ENCODE measurements at regions of chr1 and their contacts with region 1.

Region 1: DNA sequence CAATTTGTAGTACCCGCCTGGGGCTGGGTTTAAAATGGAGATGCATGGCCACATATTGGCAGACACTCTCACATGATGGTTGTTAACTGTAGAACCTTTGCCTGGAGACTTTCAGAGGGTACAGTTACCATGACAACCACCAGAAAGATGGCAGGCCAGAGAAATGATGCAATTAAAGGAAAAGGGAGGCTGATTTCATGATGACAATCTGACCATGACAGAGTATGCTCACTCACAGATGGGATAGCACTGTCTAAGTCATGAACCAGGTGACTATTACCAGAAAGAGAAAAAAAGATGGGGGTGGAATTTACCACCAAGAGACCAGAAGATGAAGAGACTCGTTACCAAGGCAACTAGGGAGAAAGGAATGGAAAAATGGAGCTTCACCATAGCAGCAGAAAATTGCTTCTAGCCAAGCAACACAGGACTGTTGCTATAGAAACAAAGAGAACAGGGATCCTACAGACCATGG is 3.5 kb upstream of the TRIT1 start:
- DNase-seq: no peak
- H3K4me3 Mint-ChIP-seq: no peak overlapping the region
- H3K27ac Mint-ChIP-seq: no peak overlapping the region
- H3K4me1 Mint-ChIP-seq: peaks cover 9% of the 10 kb centered on the region
- H3K27me3 Mint-ChIP-seq: peaks cover 2% of the 10 kb centered on the region

Region 2: GRCh38 chr1:39845275-39846116 is 41.3 kb before region 1 on chr1:
- CTCF ChIA-PET with region 1: no interaction called
- intact Hi-C with region 1: loop called (anchors 5 kb)
- DNase-seq: peak; percentile 94
- H3K4me3 Mint-ChIP-seq: no peak overlapping the region
- H3K27ac Mint-ChIP-seq: peak overlapping the region; percentile 87
- H3K4me1 Mint-ChIP-seq: peaks cover 52% of the 10 kb centered on the region
- H3K27me3 Mint-ChIP-seq: no peaks in the 10 kb centered on the region

Region 3: GRCh38 chr1:39954816-39955546 is 68.2 kb after region 1 on chr1 and contains the start of gene MFSD2A:
- CTCF ChIA-PET with region 1: no interaction called
- intact Hi-C with region 1: loop called (anchors 1 kb)
- DNase-seq: peak; percentile 89
- H3K4me3 Mint-ChIP-seq: peak within 1 kb of the TSS; percentile 88
- H3K27ac Mint-ChIP-seq: peak within 1 kb of the TSS; percentile 77
- H3K4me1 Mint-ChIP-seq: peaks cover 33% of the 10 kb centered on the region
- H3K27me3 Mint-ChIP-seq: no peaks in the 10 kb centered on the region
- total RNA-seq, gene MFSD2A: 4.0 to 4.5 TPM